Heart right ventricle (tissue), 16 donors: ENCODE measurements at regions of chr14 and their contacts with region 1.

Region 1: DNA sequence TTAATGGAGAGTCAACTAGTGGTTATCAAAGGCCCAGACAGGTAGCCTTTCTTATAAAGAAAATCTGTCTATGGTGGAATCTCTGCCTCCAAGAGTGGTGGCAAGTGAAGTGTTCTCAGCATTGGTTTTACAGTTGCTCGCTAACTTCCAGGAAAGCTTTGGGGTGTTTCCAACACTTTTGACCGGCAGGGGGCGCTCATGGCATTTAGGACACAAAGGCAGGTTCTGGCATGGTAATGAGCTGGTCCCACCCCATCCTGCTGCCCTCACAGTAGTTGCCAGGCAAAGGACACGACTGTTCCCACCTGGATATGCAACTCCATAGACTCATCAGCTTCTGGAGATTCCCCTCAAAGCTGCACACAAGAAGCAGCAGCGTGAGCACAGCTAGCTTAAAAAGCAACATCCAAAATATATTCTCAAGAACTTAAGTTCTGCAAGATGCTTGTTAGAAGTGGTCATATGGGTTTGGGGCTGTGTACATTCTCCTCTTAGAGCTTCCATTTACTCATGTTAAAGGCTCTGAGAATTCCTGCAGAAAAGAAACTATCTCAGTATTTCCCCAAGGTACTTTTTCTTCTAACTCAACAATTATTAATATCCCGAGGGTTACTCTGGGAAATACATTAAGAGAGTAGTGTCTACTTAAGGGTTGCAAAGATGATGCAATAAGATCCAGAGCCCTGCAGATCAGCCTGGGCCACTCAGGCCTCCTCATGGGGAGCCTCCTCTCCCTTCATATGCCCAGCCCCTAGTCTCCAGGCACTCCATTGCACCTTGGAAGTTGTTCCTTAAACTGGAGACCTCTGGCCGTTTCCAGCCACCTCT is 14.8 kb downstream of the PROX2 start:
- DNase-seq: peak; percentile 90 to 91
- ATAC-seq: peak; percentile 68 to 88 (median 82)
- H3K4me3 ChIP-seq: no peak overlapping the region
- H3K27ac ChIP-seq: no peak overlapping the region
- H3K4me1 ChIP-seq: peaks cover 0 to 16% (median 13%) of the 10 kb centered on the region in 9 donors
- H3K27me3 ChIP-seq: no peaks in the 10 kb centered on the region
- CTCF ChIP-seq: peak; percentile 86 to 96 (median 88)

Region 2: DNA sequence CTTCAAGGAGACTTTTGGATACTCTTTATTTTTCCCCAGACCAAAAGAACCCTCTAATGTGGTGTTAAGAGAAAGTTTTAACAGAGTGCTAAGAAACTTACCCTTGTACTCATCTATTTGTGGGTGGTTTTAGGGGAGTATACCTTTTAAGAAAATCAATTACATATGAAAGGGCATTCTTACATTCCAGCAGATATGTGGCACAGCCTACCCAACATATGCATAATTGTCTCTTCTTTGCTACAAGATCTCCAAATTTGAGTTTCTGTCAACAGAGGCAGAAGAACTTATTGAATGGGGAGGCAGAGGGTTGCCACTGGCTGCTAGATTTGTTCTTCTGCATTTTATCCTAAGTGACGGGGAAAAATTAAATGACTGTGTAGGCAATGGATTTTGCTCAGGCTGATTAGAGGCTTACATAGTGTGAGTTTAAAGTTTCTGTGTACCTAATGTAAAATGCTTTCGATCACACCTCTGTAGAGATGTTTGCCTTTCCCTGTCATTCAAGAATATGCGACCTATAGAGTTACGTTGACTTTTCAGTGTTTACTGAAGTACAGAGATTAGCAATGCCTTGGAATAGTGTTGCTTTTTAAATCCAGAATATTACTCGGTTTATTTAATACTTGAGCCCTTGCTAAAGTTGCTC is 39.7 kb before region 1 on chr14:
- intact Hi-C with region 1: no loop called
- DNase-seq: no peak
- ATAC-seq: no peak
- H3K4me3 ChIP-seq: no peak overlapping the region
- H3K27ac ChIP-seq: no peak overlapping the region
- H3K4me1 ChIP-seq: peaks cover 0 to 8% (median 0%) of the 10 kb centered on the region in 9 donors
- H3K27me3 ChIP-seq: no peaks in the 10 kb centered on the region
- CTCF ChIP-seq: no peak

Region 3: DNA sequence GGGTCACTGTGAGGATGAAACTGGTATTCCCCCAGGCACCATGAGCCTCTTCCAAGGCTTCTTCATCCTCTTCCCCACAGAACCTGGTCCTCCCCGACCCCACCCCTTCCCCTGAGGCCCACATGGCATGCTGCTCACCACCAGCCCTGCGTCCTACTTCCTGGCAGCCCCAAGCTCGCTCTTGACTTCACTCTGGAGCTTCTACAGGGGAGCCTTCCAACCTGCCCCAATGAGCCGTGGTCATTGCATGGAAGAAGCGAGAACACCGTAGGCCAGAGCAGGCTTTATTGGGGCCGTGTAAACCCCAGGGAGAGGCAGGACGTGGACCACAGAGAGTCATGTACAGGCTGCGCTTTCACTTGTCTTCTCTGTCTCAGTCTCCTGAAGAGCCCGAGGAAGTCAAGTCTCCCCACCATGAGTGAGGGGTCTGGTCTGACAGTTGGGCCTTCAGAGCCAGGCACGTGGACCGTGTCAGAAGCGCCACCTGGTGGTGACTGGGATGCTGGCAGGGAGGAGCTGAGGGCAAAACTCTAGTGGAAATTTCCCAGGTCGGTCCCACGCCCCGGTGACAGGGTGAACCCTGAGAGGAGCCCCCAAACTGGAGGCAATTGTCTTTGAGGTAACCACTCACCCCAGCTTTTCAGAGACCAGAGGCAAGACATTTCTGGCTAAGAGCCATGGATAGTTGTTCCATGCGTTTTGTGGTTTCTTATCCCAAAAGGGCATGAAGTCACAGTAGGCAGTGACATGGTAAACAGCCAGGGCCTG is 44.4 kb after region 1 on chr14:
- intact Hi-C with region 1: loop called in 9 of 10 experiments (anchors 1 to 5 kb)
- DNase-seq: peak; percentile 71 to 80
- ATAC-seq: peak; percentile 30 to 56 (median 49)
- H3K4me3 ChIP-seq: no peak overlapping the region
- H3K27ac ChIP-seq: peak overlapping the region in 2 of 10 donors; percentile 16 to 24
- H3K4me1 ChIP-seq: peaks cover 16 to 60% (median 40%) of the 10 kb centered on the region in 9 donors
- H3K27me3 ChIP-seq: no peaks in the 10 kb centered on the region
- CTCF ChIP-seq: peak; percentile 76 to 96 (median 93)

Region 4: GRCh38 chr14:75094896-75095295 is 233.8 kb after region 1 on chr14:
- intact Hi-C with region 1: loop called in 1 of 10 experiments (anchors 5 kb)
- DNase-seq: no peak
- ATAC-seq: no peak
- H3K4me3 ChIP-seq: no peak overlapping the region
- H3K27ac ChIP-seq: no peak overlapping the region
- H3K4me1 ChIP-seq: peaks cover 0 to 6% (median 0%) of the 10 kb centered on the region in 9 donors
- H3K27me3 ChIP-seq: no peaks in the 10 kb centered on the region
- CTCF ChIP-seq: no peak